Activated B cell treated with CpG ODN at 0.5 μM for 24 hours (primary cell): ENCODE measurements at regions of chr4 and their contacts with region 1.

Region 1: DNA sequence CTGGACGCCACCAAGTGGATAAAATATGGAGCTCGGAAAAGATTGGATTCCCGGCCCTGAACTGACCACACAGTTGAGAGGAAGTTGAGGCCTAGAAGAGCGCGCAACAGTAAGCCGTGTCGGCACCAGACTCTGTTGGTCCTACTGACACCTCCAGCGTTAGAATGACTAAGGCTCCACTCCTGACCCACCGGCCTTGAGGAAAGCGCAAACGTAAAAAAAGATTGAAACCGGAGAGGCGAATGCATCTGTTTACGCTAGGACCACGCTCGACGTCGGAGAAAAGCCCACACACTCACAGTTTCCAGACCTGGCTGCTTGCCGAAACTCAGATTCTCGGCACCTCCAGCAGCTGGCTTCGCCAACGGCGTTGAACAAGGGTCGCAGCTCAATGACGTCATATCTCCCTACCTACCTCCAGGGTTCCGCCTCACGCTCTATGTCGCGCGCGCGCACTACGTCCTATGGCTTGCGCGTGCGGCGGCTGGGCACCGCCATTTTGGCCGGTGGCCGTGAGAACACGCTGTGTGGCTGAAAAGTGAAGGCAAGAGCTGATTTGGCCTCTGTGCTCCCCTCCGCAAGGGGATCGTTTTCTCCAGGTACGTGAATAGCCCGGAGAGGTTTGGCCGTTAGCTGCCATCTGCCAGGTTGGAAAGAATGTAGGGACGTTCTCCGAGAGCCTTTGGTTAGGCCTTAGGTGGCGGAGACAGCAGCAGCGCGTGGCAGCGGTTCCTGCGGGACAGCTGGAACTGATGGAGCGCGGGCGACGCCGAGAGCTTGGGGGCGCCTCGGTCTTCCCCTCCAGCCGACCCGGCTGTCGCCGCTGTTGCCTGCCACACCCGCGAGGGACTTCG is at the starts of genes ABCE1 and ANAPC10:
- DNase-seq: peak; percentile 87
- ATAC-seq: peak; percentile 89
- H3K4me3 Mint-ChIP-seq: peak within 1 kb of the TSS; percentile 94
- H3K27ac Mint-ChIP-seq: peak within 1 kb of the TSS; percentile 96
- H3K4me1 Mint-ChIP-seq: peaks cover 51% of the 10 kb centered on the region
- H3K27me3 Mint-ChIP-seq: no peaks in the 10 kb centered on the region
- CTCF ChIP-seq: no peak
- total RNA-seq, gene ABCE1: 75.5 and 81.6 TPM in 2 replicates
- total RNA-seq, gene ANAPC10: 18.2 and 21.8 TPM in 2 replicates

Region 2: DNA sequence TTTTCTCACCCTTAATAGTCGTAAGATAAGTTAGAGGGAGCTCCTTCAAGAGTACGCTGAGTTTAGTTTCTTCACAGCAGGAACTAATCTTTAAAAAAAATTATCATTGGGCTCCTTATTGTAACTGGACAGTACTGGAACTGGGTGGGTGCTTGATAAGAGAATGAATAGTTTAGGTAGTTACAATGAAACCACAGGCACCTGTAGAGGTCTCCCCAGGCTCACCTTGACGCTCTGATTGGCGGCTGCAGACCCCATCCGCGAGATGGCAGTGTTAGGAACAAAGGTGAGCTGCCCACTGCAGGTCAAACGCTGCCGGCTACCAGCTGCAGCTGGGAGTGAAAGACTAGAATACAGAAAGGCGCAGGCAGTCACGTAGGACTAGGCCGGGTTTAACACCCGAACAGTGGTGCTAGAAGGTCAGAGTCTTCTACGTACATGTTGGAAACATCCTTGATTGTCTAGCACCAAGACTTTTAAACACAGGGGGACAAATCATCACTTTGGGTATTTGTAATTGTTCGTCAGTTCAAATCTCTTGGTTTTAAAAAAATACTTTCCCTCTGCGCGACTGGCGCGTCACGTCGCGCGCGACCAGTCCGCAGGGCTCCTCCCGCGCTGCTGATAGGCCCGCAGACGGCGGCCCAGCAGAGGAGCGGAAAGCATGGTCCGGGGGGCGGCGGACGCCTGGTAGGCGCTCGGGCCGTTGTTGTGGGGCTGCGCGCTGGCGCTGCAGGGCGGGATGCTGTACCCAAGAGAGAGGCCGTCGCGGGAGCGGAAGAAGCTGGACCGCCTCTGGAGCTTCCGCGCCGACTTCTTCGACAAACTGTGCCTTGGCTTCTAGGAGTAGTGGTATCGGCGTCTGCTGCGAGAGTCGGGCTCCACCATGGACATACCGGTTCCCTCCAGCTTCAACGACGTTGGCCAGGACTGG is 1539.0 kb before region 1 on chr4:
- CTCF ChIA-PET with region 1: no interaction called
- POLR2A ChIA-PET with region 1: no interaction called
- intact Hi-C with region 1: loop called (anchors 2 kb)
- DNase-seq: peak; percentile 52
- ATAC-seq: peak; percentile 88
- H3K4me3 Mint-ChIP-seq: peak overlapping the region; percentile 94
- H3K27ac Mint-ChIP-seq: peak overlapping the region; percentile 92
- H3K4me1 Mint-ChIP-seq: peaks cover 28% of the 10 kb centered on the region
- H3K27me3 Mint-ChIP-seq: no peaks in the 10 kb centered on the region
- CTCF ChIP-seq: no peak

Region 3: GRCh38 chr4:145132511-145133098 is 34.6 kb after region 1 on chr4:
- CTCF ChIA-PET with region 1: no interaction called
- POLR2A ChIA-PET with region 1: interaction called, 8 read pairs
- intact Hi-C with region 1: loop called (anchors 5 kb)
- DNase-seq: no peak
- ATAC-seq: peak; percentile 76
- H3K4me3 Mint-ChIP-seq: peak overlapping the region; percentile 1
- H3K27ac Mint-ChIP-seq: peak overlapping the region; percentile 76
- H3K4me1 Mint-ChIP-seq: peaks cover 29% of the 10 kb centered on the region
- H3K27me3 Mint-ChIP-seq: no peaks in the 10 kb centered on the region
- CTCF ChIP-seq: no peak

Region 4: DNA sequence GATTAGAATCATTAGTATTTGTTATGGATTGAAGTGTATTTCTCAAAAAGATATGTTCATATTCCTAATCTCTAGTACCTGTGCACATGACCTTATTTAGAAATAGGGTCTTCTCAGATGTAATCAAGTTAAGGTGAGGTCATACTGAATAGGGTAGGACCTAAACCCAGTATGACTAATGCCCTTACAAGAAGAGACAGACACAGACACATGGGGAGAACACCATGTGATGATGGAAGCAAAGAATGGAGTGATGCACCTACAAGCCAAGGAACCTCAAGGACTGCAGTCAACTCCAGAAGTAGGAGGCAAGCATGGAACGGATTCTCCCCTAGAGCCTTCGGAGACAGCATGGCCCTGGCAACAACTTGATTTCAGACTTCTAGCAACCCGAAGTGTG is 50.9 kb after region 1 on chr4:
- CTCF ChIA-PET with region 1: no interaction called
- POLR2A ChIA-PET with region 1: no interaction called
- intact Hi-C with region 1: loop called (anchors 5 kb)
- DNase-seq: no peak
- ATAC-seq: no peak
- H3K4me3 Mint-ChIP-seq: no peak overlapping the region
- H3K27ac Mint-ChIP-seq: no peak overlapping the region
- H3K4me1 Mint-ChIP-seq: peaks cover 3% of the 10 kb centered on the region
- H3K27me3 Mint-ChIP-seq: no peaks in the 10 kb centered on the region
- CTCF ChIP-seq: no peak

Region 5: DNA sequence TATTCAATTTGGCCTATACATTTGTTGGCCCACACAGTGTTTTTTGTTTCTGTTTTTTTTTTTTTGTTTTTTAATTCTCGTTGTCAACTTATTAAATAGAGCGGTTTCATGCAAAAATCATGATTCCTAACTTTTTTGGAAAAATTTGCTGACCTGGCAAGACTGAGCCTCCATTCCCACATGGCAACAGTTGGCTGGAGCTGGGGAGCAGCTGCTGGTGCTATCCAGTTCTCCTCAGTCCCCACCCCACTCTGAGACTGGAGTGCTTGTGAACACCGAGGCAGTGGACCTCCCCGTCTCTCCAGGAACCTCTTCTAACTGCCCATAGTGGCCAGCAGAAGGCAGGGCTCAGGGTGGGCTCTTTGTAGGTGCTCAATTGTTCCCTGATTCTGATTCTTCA is 178.0 kb after region 1 on chr4:
- CTCF ChIA-PET with region 1: no interaction called
- POLR2A ChIA-PET with region 1: no interaction called
- intact Hi-C with region 1: no loop called
- DNase-seq: no peak
- ATAC-seq: no peak
- H3K4me3 Mint-ChIP-seq: no peak overlapping the region
- H3K27ac Mint-ChIP-seq: no peak overlapping the region
- H3K4me1 Mint-ChIP-seq: no peaks in the 10 kb centered on the region
- H3K27me3 Mint-ChIP-seq: peaks cover 11% of the 10 kb centered on the region
- CTCF ChIP-seq: no peak